Right ventricle myocardium inferior (tissue), 1 donor: ENCODE measurements at regions of chr3 and their contacts with region 1.

Region 1: DNA sequence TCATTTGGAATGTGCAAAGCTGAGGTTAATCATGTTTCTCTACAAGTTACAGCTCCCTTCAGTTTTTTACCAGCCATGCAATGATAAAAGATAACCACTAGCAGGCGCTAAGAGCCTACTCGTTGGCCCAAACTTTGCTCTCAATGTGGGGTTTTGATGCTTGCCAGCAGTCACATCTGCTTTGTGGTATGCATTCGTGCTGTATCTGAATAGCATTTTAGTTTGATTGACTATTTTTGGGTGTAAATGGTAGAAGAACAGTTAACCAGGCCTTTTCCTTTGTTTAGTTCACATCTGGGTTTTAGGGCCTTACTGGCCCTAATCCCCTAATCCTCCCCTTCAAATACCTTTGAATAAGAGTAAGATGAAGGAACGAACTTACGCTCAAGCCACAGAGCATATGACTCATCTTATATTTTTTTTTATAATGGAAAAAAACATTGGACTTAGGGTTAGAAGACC is 4.4 kb upstream of the CLDN11 start:
- DNase-seq: no peak
- ATAC-seq: peak; percentile 49

Region 2: GRCh38 chr3:170089862-170090600 is 324.2 kb before region 1 on chr3:
- intact Hi-C with region 1: no loop called
- DNase-seq: no peak
- ATAC-seq: no peak

Region 3: DNA sequence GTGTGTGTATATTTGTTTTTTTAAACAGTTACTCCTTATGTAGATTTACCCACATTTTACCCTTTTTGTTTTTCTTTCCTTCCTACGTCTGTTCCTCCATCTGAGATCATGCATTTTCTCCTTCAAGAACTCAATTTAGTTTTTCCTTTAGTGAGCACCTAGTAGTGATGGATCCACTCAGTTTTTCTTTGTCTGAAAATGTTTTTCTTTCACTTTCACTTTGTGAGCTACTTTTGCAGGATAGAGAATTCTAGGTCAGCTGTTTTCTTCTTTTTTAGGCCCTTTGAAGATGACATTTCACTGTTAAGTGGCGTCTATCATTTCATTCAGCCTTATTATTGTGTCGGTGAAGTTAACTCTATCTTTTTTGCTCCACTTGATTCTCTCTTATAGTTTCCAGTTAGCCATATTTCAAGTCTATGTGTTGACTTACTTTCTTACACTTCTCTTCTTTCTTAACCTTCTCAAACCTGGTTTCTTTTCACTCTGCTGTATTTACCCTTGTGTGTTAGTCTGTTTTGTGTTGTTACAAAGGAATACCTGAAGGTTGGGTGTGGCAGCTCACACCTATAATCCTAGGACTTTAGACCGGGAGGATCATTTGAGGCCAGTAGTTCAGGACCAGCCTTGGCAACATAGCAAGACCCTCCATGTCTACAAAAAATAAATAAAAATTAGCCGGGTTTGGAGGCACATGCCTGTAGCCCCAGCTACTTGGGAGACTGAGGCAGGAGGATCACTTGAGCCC is 136.2 kb before region 1 on chr3:
- intact Hi-C with region 1: no loop called
- DNase-seq: no peak
- ATAC-seq: no peak

Region 4: DNA sequence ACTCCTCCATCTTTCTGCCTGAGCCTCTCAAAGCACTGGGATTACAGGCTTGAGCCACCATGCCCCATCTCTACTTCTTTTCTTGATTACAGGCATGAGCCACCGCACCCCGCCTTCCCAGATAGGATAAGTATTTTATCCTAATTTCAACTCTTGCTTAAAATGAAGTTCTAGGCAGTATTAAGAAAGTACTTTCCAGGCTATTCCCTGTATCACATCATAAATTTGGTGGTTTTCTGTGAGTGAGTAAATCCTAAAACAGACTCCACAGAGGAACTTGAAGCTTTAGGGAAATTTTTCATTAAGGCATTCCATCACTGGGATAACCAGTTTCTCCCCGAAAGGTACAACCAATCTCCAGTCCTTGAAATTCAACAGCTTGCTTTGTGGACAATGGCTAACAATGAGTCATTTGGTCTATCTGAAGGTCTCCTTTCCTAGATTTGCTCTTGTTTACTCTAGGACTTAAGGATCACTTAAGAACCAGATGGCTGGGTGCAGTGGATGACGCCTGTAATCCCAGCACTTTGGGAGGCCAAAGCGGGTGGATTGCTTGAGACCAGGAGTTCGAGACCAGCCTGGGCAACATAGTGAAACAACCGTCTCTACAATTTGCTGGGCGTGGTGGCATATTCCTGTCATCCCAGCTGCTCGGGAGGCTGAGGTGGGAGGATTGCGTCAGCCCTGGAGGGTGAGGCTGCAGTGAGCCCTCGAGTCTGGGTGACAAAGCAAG is 106.4 kb before region 1 on chr3:
- intact Hi-C with region 1: loop called (anchors 2 kb)
- DNase-seq: no peak
- ATAC-seq: no peak

Region 5: DNA sequence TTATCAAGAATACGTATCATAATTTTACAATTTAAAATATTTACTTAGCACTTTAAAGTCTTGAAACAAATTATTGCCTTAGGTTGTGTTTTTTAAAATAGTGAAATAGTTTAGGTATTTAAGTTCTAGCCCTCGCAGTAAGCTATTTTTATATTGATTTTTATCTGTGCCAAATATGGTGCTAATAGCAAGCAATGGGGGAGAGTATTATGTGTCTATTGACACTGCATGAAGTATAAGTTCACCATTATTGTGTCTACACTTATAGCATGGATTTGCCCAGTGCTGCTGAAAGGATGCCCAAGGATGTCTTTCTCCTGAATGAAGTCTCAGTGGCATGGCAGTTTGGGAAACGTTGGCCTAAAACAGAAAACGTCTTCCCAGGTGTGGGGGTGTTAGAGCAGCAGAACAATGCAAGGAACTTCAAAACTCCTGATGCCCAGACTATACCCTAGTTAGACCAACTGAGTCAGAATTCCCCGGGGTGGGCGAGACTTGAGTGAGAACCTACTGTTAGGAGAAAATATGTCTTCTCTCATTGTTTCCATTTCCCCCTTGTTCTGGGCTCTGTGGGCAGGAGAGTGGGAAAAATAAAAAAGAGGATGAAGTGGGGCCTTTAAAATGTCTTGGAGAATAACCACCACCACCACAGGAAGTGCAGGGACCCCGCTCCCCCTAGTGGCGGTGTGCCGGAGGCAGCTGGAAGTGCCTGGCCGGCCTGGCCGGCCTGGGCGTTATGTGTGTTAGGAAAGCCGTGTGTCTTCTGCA is 275.8 kb after region 1 on chr3:
- intact Hi-C with region 1: loop called (anchors 2 kb)
- DNase-seq: peak; percentile 74
- ATAC-seq: peak; percentile 73

Region 6: DNA sequence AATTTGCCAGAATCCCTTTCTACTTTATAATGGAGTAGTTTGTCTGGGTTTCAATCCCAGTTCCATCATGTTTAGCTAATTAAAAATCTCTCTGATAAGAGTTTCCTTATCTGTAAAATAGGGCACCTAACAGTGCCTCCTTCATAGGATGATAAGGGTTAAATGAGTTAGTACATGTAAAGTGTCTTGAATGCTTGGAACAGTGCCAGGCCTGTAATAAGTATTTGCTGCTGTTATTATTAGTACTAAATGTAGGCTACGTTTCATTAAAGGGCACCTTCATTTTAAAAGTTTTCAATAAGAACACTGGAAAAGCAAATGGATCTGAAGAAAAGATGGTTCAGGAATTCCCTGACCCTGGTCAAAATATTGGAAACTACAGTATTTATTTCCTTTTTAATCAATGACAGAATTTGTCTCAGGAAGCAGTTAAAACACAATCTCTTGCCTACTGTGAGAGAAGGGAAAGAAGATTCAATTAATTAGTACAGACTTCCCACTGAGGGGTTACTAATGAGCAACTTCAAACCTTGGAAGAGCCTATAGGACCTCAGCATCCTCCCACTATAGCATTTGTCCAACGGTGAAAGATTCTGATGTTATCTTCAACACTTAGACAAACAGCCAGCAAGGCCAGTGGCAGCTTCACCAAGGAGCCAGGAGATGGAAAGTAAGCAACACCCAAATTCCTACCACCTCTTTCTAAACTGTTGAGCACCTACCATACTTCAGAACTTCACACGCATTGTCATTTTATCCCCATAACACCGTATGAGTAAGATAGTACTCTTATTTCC is 624.3 kb after region 1 on chr3:
- intact Hi-C with region 1: no loop called
- DNase-seq: no peak
- ATAC-seq: no peak